ENCODE measurements at regions of chr5 and their contacts with region 1.

Region 1: DNA sequence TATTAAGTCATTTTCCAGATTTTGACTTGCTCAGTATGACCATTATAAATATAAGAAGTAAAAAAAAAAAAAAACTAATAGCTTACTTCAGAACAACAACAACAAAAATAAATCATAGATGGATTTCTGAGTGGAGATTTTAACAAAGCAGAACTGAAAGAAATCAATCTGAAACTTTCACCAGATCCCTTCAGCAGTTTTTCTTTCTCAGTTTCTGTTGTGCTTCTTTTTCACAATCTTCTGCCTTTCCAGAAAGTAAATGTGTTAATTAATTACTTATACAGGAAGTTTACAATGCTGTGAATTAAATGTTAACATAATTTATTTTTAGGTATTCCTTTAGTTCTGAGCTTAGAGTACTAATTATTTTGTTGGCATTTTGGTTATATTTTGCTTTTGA is 73.5 kb downstream of the CHSY3 start:
- DNase-seq: no peak
- H3K4me3 ChIP-seq: no peak overlapping the region
- H3K27ac ChIP-seq: no peak overlapping the region
- H3K4me1 ChIP-seq: no peaks in the 10 kb centered on the region
- H3K27me3 ChIP-seq: no peaks in the 10 kb centered on the region
- CTCF ChIP-seq: no peak

Region 2: GRCh38 chr5:129917224-129917623 is 60.6 kb before region 1 on chr5:
- CTCF ChIA-PET with region 1: interaction called, 11 read pairs
- POLR2A ChIA-PET with region 1: no interaction called
- intact Hi-C with region 1: no loop called
- DNase-seq: no peak
- H3K4me3 ChIP-seq: no peak overlapping the region
- H3K27ac ChIP-seq: no peak overlapping the region
- H3K4me1 ChIP-seq: no peaks in the 10 kb centered on the region
- H3K27me3 ChIP-seq: peaks cover 6% of the 10 kb centered on the region
- CTCF ChIP-seq: no peak

Measured in A673 (cell line).